ENCODE measurements at regions of chr1 and their contacts with region 1.

Region 1: GRCh38 chr1:65067491-65068201 is 80.4 kb upstream of the AK4 start:
- DNase-seq: peak; percentile 50 to 84 (median 74)
- H3K4me3 ChIP-seq: peak overlapping the region; percentile 55 to 100 (median 92)
- H3K27ac ChIP-seq: peak overlapping the region; percentile 95 to 100 (median 100)
- H3K27me3 ChIP-seq: no peaks in the 10 kb centered on the region
- CTCF ChIP-seq: peak in 8 of 56 donors; percentile 7 to 24 (median 16)

Region 2: GRCh38 chr1:64898107-64898845 is 169.4 kb before region 1 on chr1:
- intact Hi-C with region 1: no loop called
- DNase-seq: peak in 5 of 10 donors; percentile 40 to 84 (median 57)
- H3K4me3 ChIP-seq: no peak overlapping the region
- H3K27ac ChIP-seq: peak overlapping the region in 25 of 59 donors; percentile 1 to 69 (median 36)
- H3K27me3 ChIP-seq: no peaks in the 10 kb centered on the region
- CTCF ChIP-seq: no peak

Region 3: DNA sequence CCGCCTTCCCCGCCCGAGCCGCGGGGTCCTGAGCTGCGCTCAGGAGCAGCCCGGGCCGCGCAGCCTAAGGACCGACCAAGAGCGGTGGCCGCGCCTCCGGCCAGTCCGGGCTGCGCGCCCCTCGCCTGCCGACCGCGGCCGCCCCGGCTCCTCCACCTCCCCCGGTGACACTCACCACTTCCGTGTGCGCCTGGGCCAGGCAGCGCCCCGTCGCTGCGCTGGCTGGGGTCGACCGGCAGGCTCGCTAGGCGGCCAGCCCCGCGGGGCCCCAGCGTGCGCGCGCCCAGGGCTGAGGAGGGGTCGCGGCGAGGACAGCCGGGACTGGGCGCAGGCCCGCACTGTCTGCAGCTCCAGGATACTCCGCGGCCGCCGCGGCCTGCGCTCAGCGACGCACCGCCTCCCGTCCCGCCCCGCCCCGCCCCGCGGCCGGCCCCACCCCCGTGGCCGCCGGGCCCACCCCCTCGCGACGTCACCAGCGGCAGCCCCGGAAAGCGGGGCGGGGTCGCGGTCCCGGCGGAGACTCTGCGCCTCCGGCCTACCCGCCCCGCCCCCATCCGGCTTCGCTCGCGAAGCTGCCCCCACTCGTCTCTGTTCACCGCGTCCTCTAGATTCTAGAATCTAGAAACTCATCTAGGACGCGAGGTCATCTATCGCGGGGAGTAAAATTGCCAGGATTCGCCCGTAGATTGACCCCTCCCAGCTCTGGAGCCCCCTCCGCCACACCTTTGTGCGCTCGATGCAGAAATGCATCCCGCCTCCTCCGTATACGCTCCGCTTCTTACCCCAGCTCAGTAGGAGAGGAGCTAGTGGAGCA is 101.3 kb before region 1 on chr1 and contains the start of gene JAK1:
- intact Hi-C with region 1: loop called (anchors 5 kb)
- DNase-seq: peak; percentile 65 to 92 (median 83)
- H3K4me3 ChIP-seq: peak within 1 kb of the TSS; percentile 65 to 99 (median 87)
- H3K27ac ChIP-seq: peak within 1 kb of the TSS; percentile 39 to 96 (median 88)
- H3K27me3 ChIP-seq: no peaks in the 10 kb centered on the region
- CTCF ChIP-seq: peak in 8 of 56 donors; percentile 3 to 38 (median 14)
- total RNA-seq, gene JAK1: 57.7 to 112 (median 83.0) TPM

Region 4: DNA sequence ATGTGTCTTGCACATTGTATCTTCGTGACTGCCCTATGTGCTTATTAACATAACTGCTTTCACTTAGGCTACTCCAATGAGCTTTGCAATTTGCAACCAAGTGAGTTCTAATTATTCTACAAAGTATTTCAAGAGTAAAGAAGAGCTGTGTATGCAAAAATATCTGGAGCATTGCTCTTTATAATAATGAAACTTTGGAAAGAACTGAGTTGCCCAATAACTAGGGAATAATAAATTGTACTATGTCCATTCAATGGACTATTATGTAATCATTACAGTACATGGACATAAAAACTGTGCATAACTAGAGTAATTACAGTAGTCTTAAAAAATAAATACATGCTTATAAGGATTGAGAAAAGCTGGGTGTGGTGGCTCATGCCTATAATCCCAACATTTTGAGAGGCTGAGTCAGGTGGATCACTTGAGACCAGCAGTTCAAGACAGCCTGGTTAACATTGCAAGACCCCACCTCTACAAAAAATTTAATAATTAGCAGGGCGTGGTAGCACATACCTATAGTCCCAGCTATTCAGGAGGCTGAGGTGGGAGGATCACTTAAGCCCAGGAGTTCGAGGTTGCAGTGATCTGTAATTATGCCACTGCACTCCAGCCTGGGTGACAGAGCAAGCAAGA is 31.0 kb before region 1 on chr1:
- intact Hi-C with region 1: no loop called
- DNase-seq: no peak
- H3K4me3 ChIP-seq: no peak overlapping the region
- H3K27ac ChIP-seq: no peak overlapping the region
- H3K27me3 ChIP-seq: no peaks in the 10 kb centered on the region
- CTCF ChIP-seq: no peak

Region 5: GRCh38 chr1:65209005-65209885 is 141.6 kb after region 1 on chr1:
- intact Hi-C with region 1: loop called (anchors 5 kb)
- DNase-seq: peak in 1 of 10 donors; percentile 35
- H3K4me3 ChIP-seq: peak overlapping the region in 4 of 59 donors; percentile 7 to 31 (median 14)
- H3K27ac ChIP-seq: peak overlapping the region in 14 of 59 donors; percentile 8 to 63 (median 44)
- H3K27me3 ChIP-seq: no peaks in the 10 kb centered on the region
- CTCF ChIP-seq: peak; percentile 55 to 84 (median 73)

Region 6: DNA sequence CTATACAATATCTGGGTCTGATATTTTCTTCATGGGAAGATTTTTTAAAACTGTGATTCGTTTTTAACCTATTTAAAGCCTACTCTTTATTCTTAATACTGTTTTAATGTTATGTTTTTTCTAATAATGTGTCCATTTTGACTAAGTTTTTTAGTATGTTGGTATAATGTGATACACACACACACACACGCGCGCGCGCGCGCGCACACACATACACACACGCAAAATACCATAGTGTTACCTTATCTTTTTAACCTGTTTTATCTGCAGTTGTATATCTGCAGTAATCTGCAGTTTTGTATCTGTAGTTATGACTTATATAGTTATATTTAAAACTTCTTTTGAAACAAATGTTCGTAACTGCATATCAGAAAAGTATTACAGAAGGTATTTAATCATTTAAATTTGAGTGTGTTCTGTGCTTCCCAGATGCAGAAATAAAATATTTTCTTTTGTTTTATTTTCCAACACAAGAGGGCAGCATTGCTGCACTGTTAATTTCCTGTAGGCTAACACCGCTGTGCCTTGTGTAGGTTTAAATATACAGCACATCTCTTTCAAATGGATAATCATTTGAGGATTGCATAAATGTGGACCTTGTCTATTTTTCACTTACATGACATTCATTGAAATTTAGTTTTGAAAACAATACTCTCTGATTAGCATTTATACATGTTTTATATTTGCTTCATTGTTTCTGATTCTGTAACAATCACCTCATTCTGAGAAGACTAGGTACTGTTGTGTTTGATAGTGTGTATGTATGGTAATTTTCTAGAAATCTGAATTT is 891.1 kb after region 1 on chr1:
- intact Hi-C with region 1: loop called in 1 of 2 experiments (anchors 10 kb)
- DNase-seq: peak in 1 of 10 donors; percentile 8
- H3K4me3 ChIP-seq: peak overlapping the region in 29 of 59 donors; percentile 1 to 56 (median 25)
- H3K27ac ChIP-seq: peak overlapping the region in 55 of 59 donors; percentile 1 to 99 (median 71)
- H3K27me3 ChIP-seq: no peaks in the 10 kb centered on the region
- CTCF ChIP-seq: peak; percentile 74 to 100 (median 88)

Measured in dorsolateral prefrontal cortex (tissue), 120 donors.